GM18951 (cell line): ENCODE measurements at regions of chr6 and their contacts with region 1.

Region 1: DNA sequence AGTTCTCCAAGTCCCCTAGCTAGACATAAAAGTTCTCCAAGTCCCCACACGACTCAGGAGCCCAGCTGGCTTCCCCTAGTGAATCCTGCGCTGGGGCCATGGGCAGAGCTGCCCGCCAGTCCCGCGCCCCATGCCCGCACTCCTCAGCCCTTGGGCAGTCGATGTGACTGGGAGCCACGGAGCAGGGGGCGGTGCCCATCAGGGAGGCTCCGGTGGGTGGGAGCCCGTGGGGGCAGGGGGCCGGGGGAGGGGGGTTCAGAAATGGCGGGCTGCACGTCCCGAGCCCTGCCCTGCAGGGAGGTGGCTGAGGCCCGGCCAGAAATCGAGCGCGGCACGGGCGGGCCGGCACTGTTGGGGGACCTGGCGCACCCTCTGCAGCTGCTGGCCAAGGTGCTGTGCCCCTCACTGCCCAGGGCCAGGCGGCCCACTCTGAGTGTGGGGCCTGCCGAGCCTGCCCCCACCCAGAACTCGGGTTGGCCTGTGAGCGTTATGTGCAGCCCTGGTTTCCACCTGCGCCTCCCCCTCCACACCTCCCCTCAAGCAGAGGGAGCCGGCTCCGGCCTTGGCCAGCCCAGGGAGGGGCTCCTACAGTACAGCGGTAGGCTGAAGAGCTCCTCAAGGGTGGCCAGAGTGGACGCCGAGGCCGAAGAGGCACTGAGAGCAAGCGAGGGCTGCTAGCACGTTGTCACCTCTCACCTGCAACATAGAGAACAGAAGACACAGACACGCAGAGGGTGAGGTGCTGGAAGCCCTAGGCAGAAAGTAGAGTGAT is 11.4 kb downstream of the GSTA5 start:
- POLR2A ChIP-seq: no peak

Region 2: DNA sequence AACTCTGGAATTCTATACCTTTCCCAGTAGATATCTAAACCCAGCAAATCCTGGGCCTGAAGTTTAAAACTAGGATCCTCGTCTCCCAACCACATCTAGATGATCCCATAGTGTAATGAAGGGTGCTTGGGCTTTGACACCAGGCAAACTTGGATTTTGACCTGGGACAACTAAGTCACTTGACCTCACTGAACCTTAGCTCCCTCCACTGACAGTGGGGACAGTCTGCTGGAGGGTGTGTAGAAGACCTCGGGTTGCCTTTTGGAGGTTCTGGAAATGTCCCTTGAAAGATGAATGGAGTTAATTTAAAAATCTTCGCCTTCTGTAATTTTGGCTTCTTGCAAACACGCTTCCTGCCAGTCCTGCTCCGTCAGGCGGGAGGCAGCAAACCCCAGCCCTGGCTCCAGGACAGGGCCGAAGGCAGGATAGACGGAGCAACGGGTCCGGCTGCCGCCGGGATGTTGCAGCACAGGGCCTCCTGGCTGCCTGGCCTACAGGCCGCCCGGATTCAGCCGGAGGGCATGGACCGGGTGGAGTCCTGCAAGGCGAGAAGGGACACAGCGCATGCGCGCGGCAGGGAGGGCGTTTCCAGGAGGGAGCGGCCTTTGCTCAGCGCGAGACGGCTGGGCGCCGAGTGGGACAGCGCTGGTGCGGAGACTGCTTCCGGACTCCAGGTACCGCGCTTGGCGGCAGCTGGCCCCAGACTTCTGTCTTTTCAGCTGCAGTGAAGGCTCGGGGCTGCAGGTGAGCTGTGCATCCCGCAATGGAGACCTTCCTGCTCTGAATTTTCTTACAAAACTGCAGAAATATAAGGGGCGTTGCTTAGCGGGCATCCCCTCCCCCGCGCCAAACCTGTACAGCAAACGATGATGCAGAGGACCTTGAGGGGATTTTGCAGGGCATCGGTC is 158.5 kb before region 1 on chr6 and contains the start of gene TMEM14A:
- in situ Hi-C with region 1: no loop called
- POLR2A ChIP-seq: peak; percentile 90

Region 3: DNA sequence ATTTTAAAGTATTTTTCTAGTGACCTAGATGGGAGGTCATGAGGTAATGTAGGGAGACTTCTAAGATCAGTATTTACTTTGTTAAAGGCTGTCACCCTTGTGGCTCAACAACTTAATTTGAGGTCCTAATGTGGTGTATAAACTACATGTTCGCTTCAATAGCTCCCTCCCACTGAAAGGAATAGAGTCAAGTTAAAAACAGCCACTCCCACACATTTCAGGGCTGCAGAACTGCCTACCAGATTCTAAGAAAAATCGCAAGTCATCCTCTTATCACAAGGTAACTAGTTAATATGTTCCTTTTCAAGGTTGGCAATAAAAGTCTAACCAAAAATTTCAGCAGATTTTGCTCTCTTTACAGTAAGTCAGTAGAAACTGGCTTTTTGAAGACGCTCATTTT is 40.8 kb before region 1 on chr6:
- in situ Hi-C with region 1: loop called (anchors 5 kb)
- POLR2A ChIP-seq: no peak

Region 4: GRCh38 chr6:52881996-52882841 is 53.0 kb after region 1 on chr6:
- in situ Hi-C with region 1: no loop called
- POLR2A ChIP-seq: no peak